PC-3 (cell line): ENCODE measurements at regions of chr1 and their contacts with region 1.

Region 1: GRCh38 chr1:41626616-41627375 is 142.3 kb upstream of the EDN2 start:
- DNase-seq: peak; percentile 77
- ATAC-seq: peak; percentile 78
- H3K4me3 ChIP-seq: no peak overlapping the region
- H3K27ac ChIP-seq: 0 out of 2 replicates have a peak overlapping the region, but pooled peaks have one; percentile 1
- H3K4me1 ChIP-seq: peaks cover 41% of the 10 kb centered on the region
- H3K27me3 ChIP-seq: no peaks in the 10 kb centered on the region
- CTCF ChIP-seq: no peak

Region 2: GRCh38 chr1:41662061-41662764 is 35.4 kb after region 1 on chr1:
- CTCF ChIA-PET with region 1: no interaction called
- POLR2A ChIA-PET with region 1: no interaction called
- intact Hi-C with region 1: loop called (anchors 5 kb)
- DNase-seq: peak; percentile 60
- ATAC-seq: peak; percentile 78
- H3K4me3 ChIP-seq: peak overlapping the region; percentile 86
- H3K27ac ChIP-seq: no peak overlapping the region
- H3K4me1 ChIP-seq: peaks cover 36% of the 10 kb centered on the region
- H3K27me3 ChIP-seq: no peaks in the 10 kb centered on the region
- CTCF ChIP-seq: no peak